MCF 10A (cell line): ENCODE measurements at regions of chr5 and their contacts with region 1.

Region 1: GRCh38 chr5:36507332-36507952 is 99.0 kb upstream of the SLC1A3 start:
- DNase-seq: peak; percentile 87
- H3K4me3 Mint-ChIP-seq: no peak overlapping the region
- H3K27ac Mint-ChIP-seq: no peak overlapping the region
- H3K4me1 Mint-ChIP-seq: peaks cover 13% of the 10 kb centered on the region
- H3K27me3 Mint-ChIP-seq: no peaks in the 10 kb centered on the region
- CTCF ChIP-seq: peak; percentile 88

Region 2: DNA sequence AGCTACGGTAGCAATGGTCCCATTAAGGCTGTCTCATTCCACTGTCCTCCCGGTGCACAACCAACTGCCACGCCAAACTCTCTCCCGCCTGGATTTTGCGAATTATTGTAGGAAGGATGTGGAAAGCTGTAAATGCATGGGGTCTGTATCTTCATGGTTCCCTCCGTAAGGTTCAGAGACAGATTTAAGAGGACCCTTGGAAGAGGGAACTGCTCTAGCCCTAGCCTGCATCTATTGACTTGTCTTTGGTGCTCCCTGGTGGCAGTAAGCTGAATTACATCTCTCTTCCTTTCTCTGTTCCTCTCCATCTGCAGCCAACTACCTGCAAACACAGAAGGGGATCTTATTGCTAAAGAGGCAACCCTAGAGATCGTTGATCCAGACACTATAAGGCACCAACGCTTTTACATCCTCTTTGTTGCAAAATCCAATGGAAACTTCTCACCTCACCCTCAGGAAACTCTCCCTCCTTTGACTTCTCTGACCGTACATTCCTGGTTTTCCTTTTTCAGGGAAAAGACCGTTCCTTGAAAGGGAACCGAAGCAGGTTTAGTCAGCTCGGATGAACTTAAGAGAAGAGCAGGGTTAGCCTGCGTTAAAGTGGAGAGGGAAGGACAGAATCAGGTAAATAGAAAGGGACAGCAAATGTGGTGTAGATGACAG is 580.9 kb before region 1 on chr5:
- CTCF ChIA-PET with region 1: no interaction called
- POLR2A ChIA-PET with region 1: no interaction called
- intact Hi-C with region 1: no loop called
- DNase-seq: peak; percentile 67
- H3K4me3 Mint-ChIP-seq: no peak overlapping the region
- H3K27ac Mint-ChIP-seq: no peak overlapping the region
- H3K4me1 Mint-ChIP-seq: peaks cover 30% of the 10 kb centered on the region
- H3K27me3 Mint-ChIP-seq: peaks cover 39% of the 10 kb centered on the region
- CTCF ChIP-seq: peak; percentile 91

Region 3: DNA sequence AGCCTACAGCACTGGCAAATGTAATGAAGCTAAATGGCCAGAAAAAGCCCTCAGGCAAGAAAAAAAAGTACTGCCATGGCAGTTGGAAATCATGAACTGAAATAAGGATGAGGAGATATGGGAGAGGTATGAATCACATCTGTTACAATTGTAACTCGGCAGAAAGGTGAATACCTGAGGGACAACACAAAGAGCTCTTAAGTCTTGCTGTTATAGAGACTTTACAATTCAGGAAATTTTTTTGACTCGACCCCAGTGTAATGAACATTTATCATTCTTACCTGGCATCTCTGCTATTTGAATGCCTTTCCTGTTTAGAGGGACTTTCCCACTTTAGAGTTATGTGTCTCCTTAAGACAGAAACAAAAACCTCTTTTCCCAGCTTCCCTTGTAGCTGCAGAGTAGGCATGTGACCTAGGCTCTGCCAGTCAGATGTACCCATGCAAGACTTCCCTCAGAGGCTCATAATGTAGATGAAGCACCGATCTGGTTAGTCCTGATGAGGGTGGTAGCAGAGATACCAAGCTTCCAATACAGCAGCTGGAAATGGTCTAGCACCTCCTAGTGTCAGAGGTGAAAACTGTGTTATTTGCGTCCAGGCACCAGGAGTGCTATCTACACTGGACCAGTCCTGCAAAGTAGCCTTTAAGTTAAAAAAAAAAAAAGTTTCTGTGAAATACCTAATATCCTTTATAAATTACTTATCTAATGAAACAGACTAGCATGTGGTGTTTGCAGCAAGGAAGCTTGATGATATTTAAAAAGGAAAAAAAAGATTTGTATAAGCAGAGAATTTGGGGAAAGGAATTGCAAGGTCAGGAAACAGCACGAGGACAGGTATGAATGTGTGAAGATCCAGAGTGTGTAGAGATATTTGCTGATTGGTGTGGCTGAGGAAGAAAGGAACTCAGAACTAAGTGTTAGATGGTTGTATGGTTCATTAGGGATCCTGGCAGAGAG is 48.0 kb before region 1 on chr5:
- CTCF ChIA-PET with region 1: interaction called, 17 read pairs
- POLR2A ChIA-PET with region 1: interaction called, 8 read pairs
- intact Hi-C with region 1: no loop called
- DNase-seq: peak; percentile 53
- H3K4me3 Mint-ChIP-seq: no peak overlapping the region
- H3K27ac Mint-ChIP-seq: no peak overlapping the region
- H3K4me1 Mint-ChIP-seq: peaks cover 31% of the 10 kb centered on the region
- H3K27me3 Mint-ChIP-seq: no peaks in the 10 kb centered on the region
- CTCF ChIP-seq: peak; percentile 23

Region 4: DNA sequence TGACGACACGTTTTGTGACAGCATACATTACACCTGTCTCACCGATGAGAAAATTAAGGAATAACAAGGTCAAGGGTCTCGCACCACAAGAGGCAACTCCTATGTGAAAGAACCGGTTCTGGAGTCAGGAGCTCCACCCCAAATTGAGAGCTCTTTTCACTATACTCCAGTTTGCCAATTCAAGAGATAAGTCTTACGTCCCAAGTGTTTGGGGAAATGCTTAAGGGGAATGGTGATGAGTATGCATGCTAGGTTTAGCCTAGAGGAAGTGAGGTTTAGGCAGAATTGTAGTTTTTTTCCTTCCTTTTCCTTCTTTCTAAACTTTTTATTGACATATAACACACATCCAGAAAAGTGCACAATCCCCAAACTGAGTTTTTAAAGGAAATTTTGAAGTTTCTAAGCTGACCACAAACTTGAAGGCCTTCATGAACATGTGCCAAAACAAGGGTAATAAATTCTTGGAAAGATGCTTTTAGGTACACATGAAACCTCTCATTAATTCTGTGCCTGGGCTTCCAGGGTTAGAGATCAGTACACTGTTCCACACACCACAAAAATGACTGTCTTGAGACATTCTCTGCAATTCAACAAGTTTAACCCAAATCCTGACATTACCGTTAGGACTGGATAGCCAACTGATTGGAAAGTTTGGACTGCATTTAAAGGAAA is 28.7 kb before region 1 on chr5:
- CTCF ChIA-PET with region 1: interaction called, 17 read pairs
- POLR2A ChIA-PET with region 1: no interaction called
- intact Hi-C with region 1: no loop called
- DNase-seq: no peak
- H3K4me3 Mint-ChIP-seq: no peak overlapping the region
- H3K27ac Mint-ChIP-seq: no peak overlapping the region
- H3K4me1 Mint-ChIP-seq: no peaks in the 10 kb centered on the region
- H3K27me3 Mint-ChIP-seq: no peaks in the 10 kb centered on the region
- CTCF ChIP-seq: no peak

Region 5: DNA sequence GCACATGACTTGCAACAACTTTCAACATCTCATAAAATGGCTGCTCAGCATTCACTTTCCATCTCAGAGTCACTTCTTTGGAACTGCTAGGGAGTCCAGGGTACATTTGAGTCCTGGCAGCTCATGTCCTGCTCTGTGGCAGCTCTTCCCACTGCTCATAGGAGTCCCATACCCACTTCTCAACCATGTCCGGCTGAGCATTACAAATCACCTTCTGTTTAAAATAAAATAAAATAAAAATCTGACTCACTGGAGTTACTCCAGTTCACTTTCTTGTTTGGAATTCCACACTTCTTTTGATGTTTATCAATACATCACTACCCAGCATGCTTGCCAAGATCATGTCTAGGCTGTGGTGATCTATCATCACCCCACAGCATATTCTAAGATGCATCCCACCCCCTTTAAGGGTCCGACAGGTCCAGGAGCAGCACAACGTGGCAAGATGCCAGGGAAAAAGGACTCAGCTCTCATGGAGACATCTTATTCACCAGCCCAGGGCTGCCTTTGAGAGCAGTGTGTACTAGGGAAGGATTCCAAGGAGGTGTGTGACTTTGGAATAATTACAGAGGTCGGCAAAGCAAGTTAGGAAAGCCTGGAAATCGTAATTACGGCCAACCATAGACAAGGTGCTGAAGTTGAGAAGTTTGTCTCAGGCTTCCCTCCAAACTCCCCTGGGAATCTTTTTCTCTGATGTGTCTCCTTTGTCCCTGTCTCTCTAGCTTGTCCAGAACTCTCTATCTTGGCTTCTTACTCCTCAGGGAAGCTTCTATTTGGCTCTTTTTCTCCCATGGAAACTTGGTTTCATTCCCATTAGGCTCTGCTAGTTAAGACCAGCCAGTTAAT is 12.5 kb before region 1 on chr5:
- CTCF ChIA-PET with region 1: interaction called, 21 read pairs
- POLR2A ChIA-PET with region 1: interaction called, 3 read pairs
- intact Hi-C with region 1: no loop called
- DNase-seq: peak; percentile 42
- H3K4me3 Mint-ChIP-seq: no peak overlapping the region
- H3K27ac Mint-ChIP-seq: no peak overlapping the region
- H3K4me1 Mint-ChIP-seq: peaks cover 25% of the 10 kb centered on the region
- H3K27me3 Mint-ChIP-seq: no peaks in the 10 kb centered on the region
- CTCF ChIP-seq: no peak

Region 6: GRCh38 chr5:36519881-36520280 is 12.4 kb after region 1 on chr5:
- CTCF ChIA-PET with region 1: interaction called, 10 read pairs
- POLR2A ChIA-PET with region 1: no interaction called
- intact Hi-C with region 1: no loop called
- DNase-seq: no peak
- H3K4me3 Mint-ChIP-seq: no peak overlapping the region
- H3K27ac Mint-ChIP-seq: no peak overlapping the region
- H3K4me1 Mint-ChIP-seq: no peaks in the 10 kb centered on the region
- H3K27me3 Mint-ChIP-seq: no peaks in the 10 kb centered on the region
- CTCF ChIP-seq: no peak

Region 7: GRCh38 chr5:36569491-36569890 is 62.0 kb after region 1 on chr5:
- CTCF ChIA-PET with region 1: no interaction called
- POLR2A ChIA-PET with region 1: no interaction called
- intact Hi-C with region 1: no loop called
- DNase-seq: peak; percentile 34
- H3K4me3 Mint-ChIP-seq: no peak overlapping the region
- H3K27ac Mint-ChIP-seq: no peak overlapping the region
- H3K4me1 Mint-ChIP-seq: peaks cover 9% of the 10 kb centered on the region
- H3K27me3 Mint-ChIP-seq: no peaks in the 10 kb centered on the region
- CTCF ChIP-seq: no peak